Activated CD4-positive, alpha-beta T cell treated with anti-CD3 and anti-CD28 coated beads, Interleukin-2, amount 10 ng/mL, durations not matched to agents 24 days and 14 days (primary cell): ENCODE measurements at regions of chr12 and their contacts with region 1.

Region 1: DNA sequence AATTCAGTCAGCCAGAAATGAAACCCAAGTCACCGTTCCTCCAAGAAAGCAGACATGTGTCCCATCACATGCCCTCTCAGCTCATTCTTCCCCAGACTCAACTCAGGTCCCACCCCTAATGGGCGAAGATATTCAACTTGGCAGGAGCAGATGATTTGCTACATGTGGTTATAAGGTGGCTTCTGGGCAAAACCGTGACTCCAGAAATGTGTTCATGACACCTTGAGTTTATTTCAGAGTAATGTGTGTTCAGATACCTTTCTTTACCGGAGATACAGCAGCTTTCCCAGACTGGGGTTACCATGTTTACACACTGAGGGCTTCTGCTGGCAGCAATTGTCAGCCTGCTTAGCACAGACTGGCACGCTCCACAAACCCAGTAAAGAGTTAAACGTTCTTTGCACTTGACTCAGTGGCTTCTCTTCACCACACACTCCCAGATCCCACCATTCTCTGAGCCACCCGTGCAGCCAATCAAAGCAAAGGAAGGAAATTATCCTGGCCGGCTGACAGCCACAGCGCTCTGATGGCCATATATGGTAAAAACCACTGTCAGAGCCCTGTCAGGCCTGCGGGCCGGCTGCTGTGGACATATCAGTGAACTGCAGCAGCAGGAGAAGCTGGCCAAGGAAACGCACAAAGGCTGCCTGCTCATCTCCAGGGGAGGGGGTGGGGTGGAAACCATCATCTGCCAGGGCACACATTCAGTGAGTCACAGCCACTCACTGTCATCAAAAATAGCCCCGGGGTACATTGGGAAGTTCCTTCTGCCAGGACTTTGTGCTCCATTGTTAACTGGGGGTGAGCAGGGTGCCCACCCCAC is 39.9 kb downstream of the CORO1C start:
- DNase-seq: peak; percentile 88
- H3K4me3 Mint-ChIP-seq: peak overlapping the region; percentile 77
- H3K27ac Mint-ChIP-seq: peak overlapping the region; percentile 97
- H3K4me1 Mint-ChIP-seq: peaks cover 66% of the 10 kb centered on the region
- H3K27me3 Mint-ChIP-seq: no peaks in the 10 kb centered on the region

Region 2: DNA sequence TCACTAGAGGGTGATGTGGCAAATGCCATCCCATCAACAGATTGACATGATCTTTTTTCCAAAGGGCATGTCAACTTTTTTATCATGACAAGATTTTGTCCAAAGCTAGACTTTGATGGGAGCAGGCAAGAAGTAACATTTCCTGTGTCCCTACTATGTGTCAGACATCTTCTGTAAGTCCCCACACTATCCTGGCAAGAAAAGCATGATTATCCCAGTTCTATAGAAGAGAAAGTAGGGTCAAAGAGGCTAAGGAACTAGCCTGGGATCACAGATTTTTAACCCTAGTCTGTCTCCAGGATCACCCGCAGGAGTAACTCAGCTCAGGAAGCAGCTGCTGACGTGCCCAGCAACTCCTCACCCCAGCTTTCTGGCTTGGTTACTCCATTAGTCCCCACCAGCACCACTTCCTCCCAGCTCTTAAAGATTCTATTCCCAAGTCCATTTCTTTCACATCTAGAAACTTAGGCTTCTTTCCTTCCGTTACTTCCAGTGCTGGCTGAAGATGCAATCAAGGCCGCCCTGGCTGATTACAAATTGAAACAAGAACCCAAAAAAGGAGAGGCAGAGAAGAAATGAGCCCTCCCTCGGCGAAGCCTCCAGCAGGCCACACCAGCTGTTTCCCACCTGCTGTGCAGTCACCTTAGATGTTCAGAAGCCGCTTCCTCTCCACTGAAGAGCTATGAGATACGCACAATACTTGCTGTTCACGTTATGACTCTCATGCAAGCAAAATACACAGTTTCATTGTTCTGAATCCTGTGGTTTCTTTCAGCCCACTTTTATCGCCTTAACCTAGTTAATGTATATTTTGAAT is 122.8 kb before region 1 on chr12:
- intact Hi-C with region 1: loop called (anchors 2 kb)
- DNase-seq: peak; percentile 93
- H3K4me3 Mint-ChIP-seq: peak overlapping the region; percentile 78
- H3K27ac Mint-ChIP-seq: peak overlapping the region; percentile 91
- H3K4me1 Mint-ChIP-seq: peaks cover 47% of the 10 kb centered on the region
- H3K27me3 Mint-ChIP-seq: no peaks in the 10 kb centered on the region

Region 3: DNA sequence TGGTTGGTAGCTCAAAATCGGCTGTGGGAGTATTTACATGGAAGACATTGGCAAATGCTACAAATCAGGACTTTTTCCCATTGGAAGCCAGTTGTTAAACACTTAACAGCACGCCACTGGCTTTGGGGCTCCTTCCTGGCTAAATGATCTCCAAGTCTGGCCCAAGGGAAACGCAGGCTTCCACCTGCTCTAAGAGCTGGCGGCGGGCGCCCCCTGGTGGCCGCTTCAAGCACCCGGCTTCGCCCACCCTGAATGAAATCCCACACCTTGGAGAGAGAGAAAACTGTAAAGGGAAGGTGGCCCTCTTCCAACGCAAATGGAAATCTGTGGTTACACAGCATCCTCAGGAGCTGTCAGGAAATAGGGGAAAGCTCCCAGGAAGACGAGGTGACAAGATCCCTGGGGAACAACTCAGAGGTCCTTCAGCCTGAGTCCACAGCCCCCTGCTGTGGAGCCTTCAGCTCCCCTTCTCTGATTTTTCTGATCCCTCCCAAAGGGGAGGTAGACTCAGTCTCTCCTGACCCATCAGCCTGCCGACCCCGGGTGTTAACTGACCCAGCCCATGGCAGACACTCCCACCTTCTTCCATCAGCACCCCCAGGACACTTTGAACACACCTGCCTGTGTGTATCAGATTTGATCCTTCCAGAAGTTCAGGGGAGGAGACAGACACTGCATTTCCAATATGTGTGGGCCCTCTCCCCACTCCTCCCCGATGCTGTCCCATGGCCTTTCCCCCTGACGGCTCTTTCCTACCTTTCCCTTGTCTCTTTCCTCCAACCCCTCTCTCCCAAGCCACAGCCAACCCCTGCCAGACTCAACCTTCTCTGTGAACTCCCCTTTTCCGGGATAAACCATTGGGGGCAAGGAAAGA is 73.1 kb before region 1 on chr12:
- intact Hi-C with region 1: loop called (anchors 1 kb)
- DNase-seq: peak; percentile 93
- H3K4me3 Mint-ChIP-seq: no peak overlapping the region
- H3K27ac Mint-ChIP-seq: peak overlapping the region; percentile 83
- H3K4me1 Mint-ChIP-seq: peaks cover 50% of the 10 kb centered on the region
- H3K27me3 Mint-ChIP-seq: no peaks in the 10 kb centered on the region

Region 4: GRCh38 chr12:108664338-108665258 is 26.8 kb before region 1 on chr12:
- intact Hi-C with region 1: loop called (anchors 1 kb)
- DNase-seq: peak; percentile 95
- H3K4me3 Mint-ChIP-seq: peak overlapping the region; percentile 58
- H3K27ac Mint-ChIP-seq: peak overlapping the region; percentile 77
- H3K4me1 Mint-ChIP-seq: peaks cover 15% of the 10 kb centered on the region
- H3K27me3 Mint-ChIP-seq: no peaks in the 10 kb centered on the region

Region 5: DNA sequence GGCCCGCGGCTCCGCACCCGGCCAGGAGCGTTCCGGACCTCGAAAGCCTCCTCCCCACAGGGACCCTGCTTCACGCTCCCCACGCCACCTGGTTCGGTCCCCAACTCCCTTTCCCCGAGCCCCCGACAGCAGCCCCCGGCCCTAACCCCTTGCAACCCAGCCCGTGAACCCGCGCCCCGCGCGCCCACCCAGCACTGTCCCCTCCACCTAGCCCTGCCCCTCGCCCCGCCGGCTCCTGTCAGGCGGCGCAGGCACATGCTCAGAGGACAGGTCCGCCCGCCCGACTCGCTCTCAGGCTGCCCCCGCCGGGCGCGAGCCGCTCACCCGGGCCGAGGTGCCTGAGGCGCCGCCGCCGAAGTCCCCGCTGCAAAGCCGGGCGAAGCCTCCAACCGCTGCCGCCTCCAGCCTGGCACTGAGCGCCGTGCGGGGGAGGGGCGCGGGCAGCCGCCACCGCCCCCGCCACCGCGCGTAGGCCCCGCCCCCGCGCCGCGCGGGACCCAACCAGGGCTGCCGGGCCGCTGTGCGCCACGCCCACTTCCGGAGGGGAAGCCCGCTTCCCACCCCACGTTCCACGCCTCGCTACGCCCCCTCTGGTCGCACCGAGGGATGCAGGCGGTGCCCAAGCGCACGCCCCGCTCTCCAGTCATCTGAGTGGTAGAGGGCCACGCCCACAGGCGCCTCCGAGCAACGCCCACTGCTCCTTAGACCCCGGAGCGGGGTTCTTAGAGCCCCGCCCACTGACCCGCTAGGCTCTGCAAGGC is 39.9 kb after region 1 on chr12 and contains the start of gene CORO1C:
- intact Hi-C with region 1: loop called (anchors 1 kb)
- DNase-seq: peak; percentile 99
- H3K4me3 Mint-ChIP-seq: peak within 1 kb of the TSS; percentile 94
- H3K27ac Mint-ChIP-seq: peak within 1 kb of the TSS; percentile 95
- H3K4me1 Mint-ChIP-seq: peaks cover 41% of the 10 kb centered on the region
- H3K27me3 Mint-ChIP-seq: peaks cover 6% of the 10 kb centered on the region
- total RNA-seq, gene CORO1C: 64.6 and 70.1 TPM in 2 replicates

Region 6: DNA sequence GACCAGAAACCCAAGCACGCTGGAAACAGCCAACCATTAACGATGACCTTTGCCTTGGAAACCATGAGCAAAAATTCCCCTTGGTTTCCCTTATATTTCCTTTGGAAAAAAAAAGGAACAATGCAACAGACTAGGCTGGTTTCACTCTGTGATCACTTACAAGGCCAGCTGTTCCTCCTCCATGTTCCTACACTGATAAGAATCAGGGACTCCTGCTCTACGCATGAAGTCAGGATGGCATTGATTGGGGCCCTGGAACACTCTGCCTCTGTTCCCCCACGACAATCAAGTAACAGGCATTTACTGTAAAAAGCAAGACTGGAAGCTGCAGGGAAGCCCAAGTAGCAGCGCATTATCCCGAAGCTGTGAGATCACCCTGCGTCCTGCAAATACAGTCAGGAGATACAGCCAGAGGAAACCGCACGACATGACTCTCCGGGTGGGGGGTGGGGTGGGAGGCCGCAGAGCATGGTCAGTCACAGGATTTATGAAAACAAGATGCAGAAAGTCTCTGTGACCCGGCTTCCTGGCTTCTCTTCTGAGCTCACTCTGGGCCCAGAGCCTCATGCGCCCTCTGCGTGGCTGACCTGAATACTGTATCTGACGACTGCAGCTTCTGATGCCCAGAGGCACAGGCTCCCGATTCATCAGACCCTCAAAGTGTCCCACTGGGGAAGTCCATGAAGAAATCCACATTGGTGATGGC is 134.9 kb after region 1 on chr12:
- intact Hi-C with region 1: no loop called
- DNase-seq: no peak
- H3K4me3 Mint-ChIP-seq: peak overlapping the region; percentile 55
- H3K27ac Mint-ChIP-seq: peak overlapping the region; percentile 58
- H3K4me1 Mint-ChIP-seq: peaks cover 54% of the 10 kb centered on the region
- H3K27me3 Mint-ChIP-seq: no peaks in the 10 kb centered on the region